ENCODE measurements at regions of chr6 and their contacts with region 1.

Region 1: DNA sequence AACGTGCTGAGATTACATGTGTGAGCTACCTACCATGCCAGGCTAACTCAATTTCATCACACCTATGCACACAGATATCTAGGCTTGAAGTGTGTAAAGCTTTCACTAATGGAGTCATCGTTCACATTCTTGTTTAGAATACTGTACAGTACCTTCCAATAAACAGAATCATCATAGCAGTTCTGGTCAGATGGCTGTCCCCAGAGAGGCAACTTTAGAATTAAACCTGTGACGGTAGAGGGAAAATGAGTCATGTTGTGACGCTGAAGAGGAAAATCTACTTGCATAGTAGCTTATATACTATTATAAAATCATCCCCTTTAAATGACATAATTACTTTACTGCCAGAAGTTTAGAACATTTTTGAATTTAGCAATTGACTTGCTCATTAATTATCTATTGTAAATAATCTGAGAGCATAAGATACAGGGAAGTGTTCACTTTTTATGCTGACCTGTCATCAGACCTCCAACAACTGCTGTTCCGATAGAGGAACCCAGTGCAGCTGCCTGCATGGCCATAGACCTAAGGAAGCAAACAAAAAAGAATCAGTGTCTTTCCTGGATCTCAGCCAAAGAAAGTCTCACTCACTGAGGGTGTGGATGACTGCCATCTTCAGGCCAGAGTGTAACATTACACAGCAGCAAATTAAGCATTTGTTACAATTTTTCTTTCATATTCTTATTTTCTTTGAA is 29.8 kb downstream of the RHAG start:
- ATAC-seq: peak; percentile 32 to 85 (median 56)
- H3K4me3 ChIP-seq: no peak overlapping the region
- H3K27ac ChIP-seq: no peak overlapping the region
- H3K4me1 ChIP-seq: no peaks in the 10 kb centered on the region

Region 2: DNA sequence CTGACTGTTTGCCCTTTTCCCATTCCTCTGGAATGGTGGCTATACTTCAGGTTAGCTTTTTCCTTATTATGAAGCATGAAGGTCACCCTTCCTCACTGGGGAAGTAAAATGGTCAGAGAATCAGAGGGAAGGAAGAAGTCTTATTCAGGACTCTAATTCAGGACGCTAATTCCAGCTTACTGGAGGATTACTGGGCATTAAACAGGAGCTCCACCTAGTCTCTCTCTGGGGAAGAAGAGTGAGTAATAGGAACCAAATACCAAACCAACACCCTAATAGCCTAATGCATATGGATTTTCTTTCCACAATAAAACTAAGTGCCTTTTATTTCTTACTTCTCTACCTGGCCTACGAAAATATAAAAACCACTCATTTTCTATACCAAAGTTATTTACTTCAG is 249.4 kb after region 1 on chr6:
- in situ Hi-C with region 1: loop called in 1 of 9 experiments (anchors 25 kb)
- ATAC-seq: peak in 2 of 8 experiments; percentile 77 to 94
- H3K4me3 ChIP-seq: no peak overlapping the region
- H3K27ac ChIP-seq: no peak overlapping the region
- H3K4me1 ChIP-seq: no peaks in the 10 kb centered on the region

Measured in motor neuron (in vitro differentiated cells).